ENCODE measurements at regions of chr1 and their contacts with region 1.

Region 1: GRCh38 chr1:6245086-6245868 is 1.3 kb downstream of the HES3 start:
- DNase-seq: peak in 8 of 10 donors; percentile 49 to 95 (median 60)

Region 2: DNA sequence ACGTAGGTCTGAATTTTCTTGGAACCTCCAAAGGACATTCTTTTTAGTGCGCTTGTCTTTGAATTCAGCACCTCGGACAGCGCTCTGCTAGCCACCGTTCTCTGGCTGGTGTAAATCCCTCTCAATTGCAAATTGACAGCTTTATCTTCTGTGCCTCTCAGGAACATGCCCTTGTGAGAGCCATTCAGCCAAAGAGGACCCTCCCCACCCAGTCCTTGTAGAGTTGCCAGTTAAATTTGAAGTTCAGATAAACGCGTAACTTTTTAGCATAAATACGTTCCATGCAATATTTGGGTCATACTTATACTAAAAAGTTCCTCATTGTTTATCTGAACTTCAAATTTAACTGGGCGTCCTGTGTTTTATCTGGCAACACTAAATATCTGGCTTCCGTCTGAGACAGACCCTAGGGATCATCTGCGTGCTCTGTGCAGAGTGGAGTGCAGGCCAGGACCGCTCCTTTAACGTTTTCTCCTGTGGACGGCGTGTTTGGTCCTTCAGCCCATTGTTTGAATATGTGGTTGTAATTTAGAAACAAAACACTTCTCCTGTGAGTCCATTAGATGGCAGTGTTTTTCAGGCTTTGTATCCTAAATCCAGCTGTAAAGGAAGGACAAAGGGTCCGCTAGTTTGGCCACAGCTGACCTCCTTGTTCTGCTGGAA is 192.6 kb before region 1 on chr1:
- intact Hi-C with region 1: loop called (anchors 2 kb)
- DNase-seq: peak in 3 of 10 donors; percentile 36 to 61 (median 52)

Region 3: GRCh38 chr1:6343506-6344405 is 98.5 kb after region 1 on chr1:
- intact Hi-C with region 1: loop called (anchors 5 kb)
- DNase-seq: peak in 9 of 10 donors; percentile 40 to 95 (median 67)

Region 4: GRCh38 chr1:6401673-6402072 is 156.4 kb after region 1 on chr1:
- intact Hi-C with region 1: loop called (anchors 1 kb)
- DNase-seq: peak in 1 of 10 donors; percentile 21

Region 5: DNA sequence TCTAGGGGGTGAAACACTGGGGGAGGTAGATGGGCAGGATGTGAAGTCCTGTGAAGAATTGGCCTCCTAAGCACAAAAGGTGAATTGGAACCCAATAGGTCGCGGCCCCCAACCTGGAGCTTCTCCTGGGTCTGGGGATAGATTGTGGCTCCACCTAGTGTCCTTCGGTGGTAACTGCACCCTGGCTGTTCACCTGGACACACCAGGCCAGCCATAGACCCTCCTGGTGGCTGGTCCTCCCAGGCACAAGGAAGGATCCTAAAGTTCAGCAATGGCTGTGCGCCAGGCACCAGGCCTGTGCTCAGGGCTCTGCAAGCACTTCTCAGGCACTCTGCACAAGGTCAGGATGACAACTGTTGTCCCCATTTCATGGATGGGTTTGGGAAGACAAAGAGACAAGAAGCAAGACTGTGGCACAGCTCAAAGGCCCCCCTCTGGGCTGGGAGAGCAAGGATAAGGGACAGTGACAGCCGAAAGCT is 192.8 kb after region 1 on chr1:
- intact Hi-C with region 1: loop called (anchors 10 kb)
- DNase-seq: peak in 8 of 10 donors; percentile 27 to 93 (median 62)

Measured in posterior cingulate gyrus (tissue), 11 donors.